Naive thymus-derived CD4-positive, alpha-beta T cell (primary cell): ENCODE measurements at regions of chr9 and their contacts with region 1.

Region 1: DNA sequence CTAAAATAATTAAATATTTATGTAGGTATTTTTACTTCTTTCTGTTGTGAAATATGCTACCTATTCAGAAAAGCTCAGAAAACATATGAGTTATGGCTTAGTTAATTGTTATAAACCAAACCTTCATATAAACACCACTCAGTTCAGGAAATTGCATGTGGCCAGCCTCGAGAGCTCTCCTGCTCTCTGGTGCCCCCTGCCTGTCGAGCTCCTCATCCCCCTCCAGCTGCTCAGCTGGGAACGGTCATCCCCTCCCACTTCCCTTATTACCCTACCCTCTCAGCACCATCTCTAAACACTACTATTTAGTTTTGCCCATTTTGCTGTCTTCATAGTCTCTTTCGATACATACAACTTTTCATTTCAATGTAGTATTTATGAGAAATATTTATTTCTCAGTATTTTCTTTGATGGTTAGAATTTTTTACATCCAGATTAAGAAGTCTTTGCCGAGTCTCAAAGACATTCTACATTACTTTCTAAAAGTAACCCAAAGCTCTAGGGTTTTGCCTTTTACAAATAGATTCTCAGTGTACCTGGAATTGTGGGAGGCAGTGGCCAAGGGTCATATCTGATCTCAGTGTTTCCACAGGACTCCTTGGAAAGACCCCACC is 51.2 kb upstream of the SEMA4D start:
- DNase-seq: peak; percentile 70 to 87 (median 81)
- ATAC-seq: peak; percentile 100
- H3K4me3 ChIP-seq: no peak overlapping the region
- H3K4me3 Mint-ChIP-seq: peak overlapping the region in 7 of 10 donors; percentile 18 to 66 (median 55)
- H3K27ac ChIP-seq: peak overlapping the region; percentile 38
- H3K27ac Mint-ChIP-seq: peak overlapping the region in 7 of 9 donors; percentile 27 to 88 (median 74)
- H3K4me1 ChIP-seq: peaks cover 11 to 22% of the 10 kb centered on the region in 2 donors
- H3K4me1 Mint-ChIP-seq: peaks cover 13 to 42% (median 31%) of the 10 kb centered on the region in 7 donors
- H3K27me3 ChIP-seq: no peaks in the 10 kb centered on the region
- H3K27me3 Mint-ChIP-seq: peaks cover 0 to 21% (median 0%) of the 10 kb centered on the region in 5 donors

Region 2: DNA sequence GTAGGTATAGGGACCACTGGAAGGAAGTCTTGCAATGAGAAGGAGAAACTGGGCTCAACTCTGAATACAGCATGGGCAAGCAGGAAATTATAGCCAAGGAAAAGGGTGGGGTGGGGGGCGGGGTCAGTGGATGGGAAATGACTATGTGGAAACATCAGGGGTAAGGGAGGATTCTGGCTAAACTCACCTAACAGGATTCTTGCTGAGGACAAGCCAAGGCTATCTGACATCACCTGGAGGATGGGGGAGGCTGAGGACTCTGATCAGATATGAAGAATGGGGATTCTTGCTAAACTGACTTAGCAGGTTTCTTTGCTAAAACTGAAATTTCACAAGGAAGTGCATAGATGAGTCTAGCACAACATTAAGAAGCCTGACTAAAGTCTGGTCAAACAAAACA is 1782.4 kb before region 1 on chr9:
- CTCF ChIA-PET with region 1: no interaction called
- POLR2A ChIA-PET with region 1: no interaction called
- intact Hi-C with region 1: no loop called
- DNase-seq: no peak
- ATAC-seq: no peak
- H3K4me3 ChIP-seq: no peak overlapping the region
- H3K4me3 Mint-ChIP-seq: no peak overlapping the region
- H3K27ac ChIP-seq: no peak overlapping the region
- H3K27ac Mint-ChIP-seq: no peak overlapping the region
- H3K4me1 ChIP-seq: no peaks in the 10 kb centered on the region
- H3K4me1 Mint-ChIP-seq: peaks cover 0 to 3% (median 0%) of the 10 kb centered on the region in 7 donors
- H3K27me3 ChIP-seq: no peaks in the 10 kb centered on the region
- H3K27me3 Mint-ChIP-seq: peaks cover 0 to 21% (median 5%) of the 10 kb centered on the region in 5 donors

Region 3: GRCh38 chr9:88280816-88281382 is 1268.2 kb before region 1 on chr9:
- CTCF ChIA-PET with region 1: no interaction called
- POLR2A ChIA-PET with region 1: no interaction called
- intact Hi-C with region 1: no loop called
- DNase-seq: no peak
- ATAC-seq: no peak
- H3K4me3 ChIP-seq: no peak overlapping the region
- H3K4me3 Mint-ChIP-seq: peak overlapping the region in 2 of 10 donors; percentile 12 to 60
- H3K27ac ChIP-seq: no peak overlapping the region
- H3K27ac Mint-ChIP-seq: no peak overlapping the region
- H3K4me1 ChIP-seq: peaks cover 0 to 4% of the 10 kb centered on the region in 2 donors
- H3K4me1 Mint-ChIP-seq: peaks cover 8 to 16% (median 10%) of the 10 kb centered on the region in 7 donors
- H3K27me3 ChIP-seq: no peaks in the 10 kb centered on the region
- H3K27me3 Mint-ChIP-seq: peaks cover 0 to 6% (median 0%) of the 10 kb centered on the region in 5 donors

Region 4: DNA sequence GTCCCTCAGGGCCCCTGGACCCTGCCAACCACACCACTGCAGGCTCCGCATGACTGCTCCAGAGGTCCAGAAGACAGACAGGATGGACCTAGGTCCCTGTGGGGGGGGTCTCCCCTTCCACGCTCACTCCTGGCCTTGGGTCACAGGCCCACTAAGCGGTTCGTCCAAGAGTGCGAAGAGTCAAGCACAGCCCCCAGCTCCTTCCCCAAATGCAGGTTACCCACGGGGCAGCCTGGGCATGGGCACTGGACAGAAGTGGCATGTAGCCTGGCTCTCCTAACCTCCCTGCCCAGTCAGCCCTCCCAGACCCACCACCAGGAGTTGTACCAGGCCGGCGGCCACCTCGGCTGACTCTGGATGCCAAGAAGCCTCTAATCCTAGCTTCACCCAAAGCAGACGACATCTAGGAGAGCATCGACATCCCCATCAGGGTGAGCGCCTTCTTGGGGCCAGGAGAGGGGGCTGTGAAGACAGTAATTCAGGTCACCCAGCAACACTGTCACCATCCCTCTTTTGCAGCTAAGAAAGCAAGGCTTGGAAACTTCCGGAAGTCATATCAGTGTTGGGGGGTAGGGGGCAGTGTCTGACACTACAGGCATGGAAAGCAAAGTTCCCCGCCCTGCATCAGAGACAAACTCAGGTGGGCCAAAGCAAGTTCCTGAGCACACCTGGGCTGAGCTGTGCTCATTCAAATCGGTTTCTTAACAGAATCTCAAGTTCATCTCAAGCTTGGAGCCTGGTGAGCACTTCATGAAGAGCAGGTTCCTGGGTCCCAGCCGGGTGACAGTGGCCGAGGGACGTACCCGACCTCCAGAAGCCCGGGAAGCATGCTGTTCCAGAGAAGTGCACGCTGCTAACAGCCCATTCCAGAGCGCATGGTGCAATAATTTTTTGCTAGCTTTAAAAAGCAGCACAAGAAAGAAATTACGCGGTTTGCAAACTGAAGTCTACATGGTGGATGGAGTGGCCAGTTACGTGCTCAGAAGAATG is 119.9 kb before region 1 on chr9:
- CTCF ChIA-PET with region 1: interaction called, 74 read pairs
- POLR2A ChIA-PET with region 1: interaction called, 31 read pairs
- intact Hi-C with region 1: loop called (anchors 1 kb)
- DNase-seq: peak in 7 of 9 donors; percentile 68 to 83 (median 77)
- ATAC-seq: peak; percentile 76
- H3K4me3 ChIP-seq: no peak overlapping the region
- H3K4me3 Mint-ChIP-seq: peak overlapping the region in 9 of 10 donors; percentile 38 to 78 (median 63)
- H3K27ac ChIP-seq: peak overlapping the region; percentile 63
- H3K27ac Mint-ChIP-seq: peak overlapping the region; percentile 84 to 97 (median 92)
- H3K4me1 ChIP-seq: peaks cover 81 to 84% of the 10 kb centered on the region in 2 donors
- H3K4me1 Mint-ChIP-seq: peaks cover 67 to 100% (median 95%) of the 10 kb centered on the region in 7 donors
- H3K27me3 ChIP-seq: no peaks in the 10 kb centered on the region
- H3K27me3 Mint-ChIP-seq: no peaks in the 10 kb centered on the region

Region 5: GRCh38 chr9:89455356-89455824 is 93.7 kb before region 1 on chr9:
- CTCF ChIA-PET with region 1: interaction called, 18 read pairs
- POLR2A ChIA-PET with region 1: interaction called, 22 read pairs
- intact Hi-C with region 1: loop called in 1 of 2 experiments (anchors 2 kb)
- DNase-seq: peak in 7 of 9 donors; percentile 44 to 69 (median 64)
- ATAC-seq: peak; percentile 68
- H3K4me3 ChIP-seq: peak overlapping the region; percentile 42
- H3K4me3 Mint-ChIP-seq: peak overlapping the region; percentile 75 to 88 (median 84)
- H3K27ac ChIP-seq: peak overlapping the region; percentile 77
- H3K27ac Mint-ChIP-seq: peak overlapping the region; percentile 73 to 99 (median 98)
- H3K4me1 ChIP-seq: peaks cover 51 to 88% of the 10 kb centered on the region in 2 donors
- H3K4me1 Mint-ChIP-seq: peaks cover 70 to 100% (median 89%) of the 10 kb centered on the region in 7 donors
- H3K27me3 ChIP-seq: no peaks in the 10 kb centered on the region
- H3K27me3 Mint-ChIP-seq: no peaks in the 10 kb centered on the region

Region 6: GRCh38 chr9:89483592-89484522 is 65.3 kb before region 1 on chr9:
- CTCF ChIA-PET with region 1: interaction called, 17 read pairs
- POLR2A ChIA-PET with region 1: interaction called, 32 read pairs
- intact Hi-C with region 1: loop called in 1 of 2 experiments (anchors 1 kb)
- DNase-seq: peak; percentile 41 to 76 (median 66)
- ATAC-seq: peak; percentile 84
- H3K4me3 ChIP-seq: peak overlapping the region; percentile 48
- H3K4me3 Mint-ChIP-seq: peak overlapping the region; percentile 85 to 100 (median 90)
- H3K27ac ChIP-seq: peak overlapping the region; percentile 68
- H3K27ac Mint-ChIP-seq: peak overlapping the region; percentile 88 to 99 (median 93)
- H3K4me1 ChIP-seq: peaks cover 67 to 71% of the 10 kb centered on the region in 2 donors
- H3K4me1 Mint-ChIP-seq: peaks cover 70 to 96% (median 90%) of the 10 kb centered on the region in 7 donors
- H3K27me3 ChIP-seq: no peaks in the 10 kb centered on the region
- H3K27me3 Mint-ChIP-seq: no peaks in the 10 kb centered on the region

Region 7: GRCh38 chr9:89505911-89506310 is 43.2 kb before region 1 on chr9:
- CTCF ChIA-PET with region 1: interaction called, 21 read pairs
- POLR2A ChIA-PET with region 1: interaction called, 11 read pairs
- intact Hi-C with region 1: loop called in 1 of 2 experiments (anchors 1 kb)
- DNase-seq: no peak
- ATAC-seq: no peak
- H3K4me3 ChIP-seq: no peak overlapping the region
- H3K4me3 Mint-ChIP-seq: peak overlapping the region in 2 of 10 donors; percentile 4 to 49
- H3K27ac ChIP-seq: no peak overlapping the region
- H3K27ac Mint-ChIP-seq: peak overlapping the region in 6 of 9 donors; percentile 1 to 81 (median 77)
- H3K4me1 ChIP-seq: peaks cover 39 to 73% of the 10 kb centered on the region in 2 donors
- H3K4me1 Mint-ChIP-seq: peaks cover 69 to 96% (median 88%) of the 10 kb centered on the region in 7 donors
- H3K27me3 ChIP-seq: no peaks in the 10 kb centered on the region
- H3K27me3 Mint-ChIP-seq: no peaks in the 10 kb centered on the region

Region 8: GRCh38 chr9:89536145-89536574 is 13.0 kb before region 1 on chr9:
- CTCF ChIA-PET with region 1: interaction called, 24 read pairs
- POLR2A ChIA-PET with region 1: interaction called, 18 read pairs
- intact Hi-C with region 1: loop called in 1 of 2 experiments (anchors 2 kb)
- DNase-seq: peak in 7 of 9 donors; percentile 51 to 79 (median 73)
- ATAC-seq: peak; percentile 81
- H3K4me3 ChIP-seq: peak overlapping the region; percentile 11
- H3K4me3 Mint-ChIP-seq: peak overlapping the region; percentile 67 to 83 (median 75)
- H3K27ac ChIP-seq: peak overlapping the region; percentile 71
- H3K27ac Mint-ChIP-seq: peak overlapping the region; percentile 69 to 100 (median 92)
- H3K4me1 ChIP-seq: peaks cover 82 to 93% of the 10 kb centered on the region in 2 donors
- H3K4me1 Mint-ChIP-seq: peaks cover 72 to 97% (median 95%) of the 10 kb centered on the region in 7 donors
- H3K27me3 ChIP-seq: no peaks in the 10 kb centered on the region
- H3K27me3 Mint-ChIP-seq: no peaks in the 10 kb centered on the region

Region 9: GRCh38 chr9:89602978-89603766 is 54.0 kb after region 1 on chr9:
- CTCF ChIA-PET with region 1: no interaction called
- POLR2A ChIA-PET with region 1: no interaction called
- intact Hi-C with region 1: no loop called
- DNase-seq: peak; percentile 74 to 88 (median 85)
- ATAC-seq: peak; percentile 55
- H3K4me3 ChIP-seq: peak overlapping the region; percentile 72
- H3K4me3 Mint-ChIP-seq: peak overlapping the region; percentile 79 to 92 (median 88)
- H3K27ac ChIP-seq: no peak overlapping the region
- H3K27ac Mint-ChIP-seq: peak overlapping the region in 7 of 9 donors; percentile 12 to 88 (median 62)
- H3K4me1 ChIP-seq: peaks cover 12 to 23% of the 10 kb centered on the region in 2 donors
- H3K4me1 Mint-ChIP-seq: peaks cover 0 to 34% (median 23%) of the 10 kb centered on the region in 7 donors
- H3K27me3 ChIP-seq: no peaks in the 10 kb centered on the region
- H3K27me3 Mint-ChIP-seq: peaks cover 0 to 21% (median 0%) of the 10 kb centered on the region in 5 donors